PC-9 (cell line): ENCODE measurements at regions of chr2 and their contacts with region 1.

Region 1: GRCh38 chr2:197113275-197113711 is 186.8 kb upstream of the PGAP1 start:
- DNase-seq: no peak
- H3K4me3 ChIP-seq: no peak overlapping the region
- H3K27ac ChIP-seq: no peak overlapping the region
- H3K4me1 ChIP-seq: no peaks in the 10 kb centered on the region; the same call in 1 of the 2 replicates
- H3K27me3 ChIP-seq: no peaks in the 10 kb centered on the region
- CTCF ChIP-seq: peak; percentile 73

Region 2: DNA sequence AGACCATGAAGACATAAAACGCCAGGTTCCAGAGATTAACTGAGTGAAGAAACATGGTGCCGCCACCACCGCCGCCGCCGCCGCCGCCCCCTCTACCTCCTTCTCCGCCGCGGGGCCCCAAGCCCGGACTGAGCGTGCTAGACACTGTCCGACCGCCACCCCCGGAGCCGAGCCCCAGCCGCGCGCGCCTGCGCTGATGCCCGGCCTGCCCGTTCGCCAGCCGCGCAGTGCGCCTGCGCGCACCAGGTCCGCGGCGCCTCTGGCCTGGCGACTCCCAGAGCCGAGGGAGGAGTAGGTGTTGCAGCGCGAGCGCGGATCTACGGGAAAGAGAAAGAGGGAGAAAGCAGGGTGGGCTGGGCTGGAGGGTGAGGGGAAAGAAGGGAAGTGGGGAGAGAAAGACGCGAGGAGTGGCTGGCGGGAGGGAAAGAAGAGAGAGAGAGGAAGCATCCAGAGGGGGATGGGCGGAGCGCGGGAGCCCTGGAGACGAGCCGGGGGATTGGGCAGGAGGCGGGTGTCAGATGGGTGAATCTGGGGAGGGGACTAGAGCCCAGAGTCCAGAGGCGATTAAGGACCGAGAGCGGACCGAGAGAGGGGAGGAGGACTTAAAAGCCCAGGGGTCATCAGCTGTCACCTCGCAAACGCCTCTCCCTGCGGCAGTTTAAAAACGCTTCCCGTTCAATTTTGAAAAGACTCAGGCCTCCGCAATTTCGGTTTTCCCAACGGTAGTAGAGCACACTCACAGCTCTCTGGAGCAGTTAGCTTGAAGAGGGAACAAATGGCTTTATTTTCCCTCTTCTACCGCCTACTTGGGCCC is 186.5 kb before region 1 on chr2 and contains the start of gene PGAP1:
- CTCF ChIA-PET with region 1: interaction called, 18 read pairs
- POLR2A ChIA-PET with region 1: no interaction called
- intact Hi-C with region 1: no loop called
- DNase-seq: peak; percentile 62 to 86
- H3K4me3 ChIP-seq: peak within 1 kb of the TSS; percentile 98
- H3K27ac ChIP-seq: peak within 1 kb of the TSS; percentile 60
- H3K4me1 ChIP-seq: peaks cover 18% of the 10 kb centered on the region
- H3K27me3 ChIP-seq: no peaks in the 10 kb centered on the region
- CTCF ChIP-seq: no peak
- total RNA-seq, gene PGAP1: 5.1 and 6.5 TPM in 2 replicates

Region 3: GRCh38 chr2:197097578-197098366 is 15.5 kb before region 1 on chr2:
- CTCF ChIA-PET with region 1: no interaction called
- POLR2A ChIA-PET with region 1: no interaction called
- intact Hi-C with region 1: no loop called
- DNase-seq: no peak
- H3K4me3 ChIP-seq: no peak overlapping the region
- H3K27ac ChIP-seq: no peak overlapping the region
- H3K4me1 ChIP-seq: no peaks in the 10 kb centered on the region
- H3K27me3 ChIP-seq: no peaks in the 10 kb centered on the region
- CTCF ChIP-seq: no peak

Region 4: DNA sequence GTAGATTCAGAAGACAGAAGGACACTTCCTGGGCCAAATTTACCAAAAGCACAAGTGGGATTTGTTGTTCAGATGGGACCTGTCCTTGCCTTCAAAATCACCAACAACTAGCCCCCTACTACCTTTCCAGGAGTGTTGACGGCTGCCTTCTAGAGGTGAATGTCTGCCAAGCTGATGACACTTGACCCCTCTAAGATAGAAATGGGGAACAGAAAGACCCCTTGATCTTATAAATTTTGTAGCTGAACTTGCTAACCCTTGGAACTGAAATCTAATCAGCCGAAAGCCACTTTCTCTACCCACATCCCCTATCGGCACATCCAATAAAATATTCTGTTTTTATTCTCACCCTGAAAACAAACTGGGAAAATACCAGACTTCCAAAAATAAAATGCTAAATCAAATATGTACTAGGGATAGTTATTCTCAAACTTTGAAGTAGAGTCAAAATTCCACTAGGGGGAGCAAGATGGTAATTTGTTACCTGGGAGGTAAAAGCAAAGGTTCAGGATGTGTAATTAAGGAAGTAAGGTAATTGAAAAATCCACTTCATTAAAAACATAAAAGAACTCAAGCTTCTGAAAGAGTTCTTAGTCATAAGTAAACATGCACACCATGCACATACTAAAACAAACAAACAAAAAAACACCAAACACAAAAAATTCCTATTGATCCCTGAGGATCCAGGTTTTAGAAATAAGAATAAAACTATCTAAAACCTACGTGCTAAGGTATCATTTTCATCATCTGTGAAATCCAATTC is 78.1 kb after region 1 on chr2:
- CTCF ChIA-PET with region 1: no interaction called
- POLR2A ChIA-PET with region 1: no interaction called
- intact Hi-C with region 1: loop called (anchors 10 kb)
- DNase-seq: peak in 1 of 2 experiments; percentile 44
- H3K4me3 ChIP-seq: no peak overlapping the region
- H3K27ac ChIP-seq: no peak overlapping the region
- H3K4me1 ChIP-seq: no peaks in the 10 kb centered on the region
- H3K27me3 ChIP-seq: no peaks in the 10 kb centered on the region
- CTCF ChIP-seq: peak; percentile 77

Region 5: DNA sequence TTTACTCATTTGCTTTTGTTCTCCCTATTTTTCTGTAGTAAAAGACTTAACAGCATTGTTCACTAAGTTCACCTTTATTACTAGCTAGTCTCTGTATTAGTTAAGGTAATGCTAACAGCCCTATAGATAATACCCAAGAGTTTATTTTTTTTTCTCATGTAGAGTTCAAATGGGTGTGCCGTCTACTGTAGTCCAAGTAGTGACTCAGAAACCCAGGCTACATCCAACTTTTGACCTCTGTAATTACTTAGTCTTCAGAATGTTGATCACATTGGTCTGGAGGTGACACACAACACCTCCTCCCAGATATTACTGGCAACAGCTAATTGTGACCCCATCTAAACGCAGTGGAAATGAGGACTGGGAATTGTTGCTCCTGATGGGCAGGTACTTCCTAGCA is 347.8 kb after region 1 on chr2:
- CTCF ChIA-PET with region 1: no interaction called
- POLR2A ChIA-PET with region 1: no interaction called
- intact Hi-C with region 1: loop called (anchors 5 kb)
- DNase-seq: peak; percentile 9 to 69
- H3K4me3 ChIP-seq: no peak overlapping the region
- H3K27ac ChIP-seq: peak overlapping the region; percentile 45; the same call in 1 of the 2 replicates
- H3K4me1 ChIP-seq: peaks cover 13% of the 10 kb centered on the region
- H3K27me3 ChIP-seq: no peaks in the 10 kb centered on the region
- CTCF ChIP-seq: no peak

Region 6: DNA sequence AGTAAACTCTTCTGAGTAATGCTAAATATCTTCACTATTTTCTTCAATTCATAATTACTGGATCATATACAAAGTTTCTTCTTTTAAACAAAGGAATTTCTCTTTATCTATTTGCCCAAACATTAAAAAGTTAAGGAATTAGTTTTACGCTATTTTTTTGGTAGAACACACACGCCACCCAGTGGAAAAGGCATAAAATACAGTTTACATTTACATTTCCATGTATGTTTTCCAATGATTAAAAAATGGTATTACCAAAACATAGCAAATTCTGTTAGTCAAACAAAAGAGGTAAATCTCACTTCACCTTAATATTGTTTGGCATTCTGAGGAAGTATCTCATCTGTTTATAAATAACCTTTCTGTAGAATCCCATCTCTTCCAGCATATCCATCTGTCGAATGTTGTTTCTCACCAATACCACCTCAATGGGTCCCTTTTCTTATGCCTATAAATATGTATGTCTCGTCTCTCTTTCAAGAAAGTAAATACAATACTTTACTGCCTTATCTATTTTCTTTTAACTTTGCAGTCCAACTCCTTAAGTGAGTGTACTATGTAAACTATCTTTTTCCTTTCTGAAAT is 664.6 kb after region 1 on chr2:
- CTCF ChIA-PET with region 1: no interaction called
- POLR2A ChIA-PET with region 1: no interaction called
- intact Hi-C with region 1: loop called (anchors 5 kb)
- DNase-seq: no peak
- H3K4me3 ChIP-seq: no peak overlapping the region
- H3K27ac ChIP-seq: no peak overlapping the region
- H3K4me1 ChIP-seq: no peaks in the 10 kb centered on the region
- H3K27me3 ChIP-seq: no peaks in the 10 kb centered on the region
- CTCF ChIP-seq: peak; percentile 85